Posterior cingulate gyrus (tissue), 11 donors: ENCODE measurements at regions of chr6 and their contacts with region 1.

Region 1: GRCh38 chr6:41920921-41921711 is at the starts of genes BYSL and MED20:
- DNase-seq: peak; percentile 91 to 99 (median 96)

Region 2: DNA sequence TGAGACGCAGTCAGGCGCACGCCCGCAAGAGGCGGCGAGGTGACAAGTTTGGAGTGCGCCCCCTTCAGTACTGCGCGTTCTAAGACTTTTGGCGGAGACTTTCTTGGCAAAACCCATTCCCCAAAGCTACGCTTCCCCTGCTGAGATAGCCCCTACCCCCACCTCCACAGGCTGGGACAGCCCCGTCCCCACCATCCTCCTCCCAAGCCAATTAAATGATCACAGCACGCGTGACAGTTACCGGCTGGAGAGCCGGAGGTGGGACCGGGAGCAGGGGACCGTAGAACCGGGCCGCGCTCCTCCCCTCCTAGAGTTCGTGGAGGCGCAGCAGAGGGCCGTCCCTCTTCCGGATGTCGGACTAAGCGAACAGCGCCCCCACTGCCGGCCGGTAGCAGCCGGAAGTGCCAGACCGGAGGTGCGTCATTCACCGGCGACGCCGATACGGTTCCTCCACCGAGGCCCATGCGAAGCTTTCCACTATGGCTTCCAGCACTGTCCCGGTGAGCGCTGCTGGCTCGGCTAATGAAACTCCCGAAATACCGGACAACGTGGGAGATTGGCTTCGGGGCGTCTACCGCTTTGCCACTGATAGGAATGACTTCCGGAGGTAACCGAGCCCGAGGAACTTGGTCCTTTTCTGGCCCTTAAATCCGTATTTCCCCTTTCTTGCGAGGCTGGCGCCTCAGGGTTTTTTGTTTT is 133.7 kb before region 1 on chr6 and contains the start of gene TOMM6:
- intact Hi-C with region 1: loop called (anchors 1 kb)
- DNase-seq: peak; percentile 90 to 99 (median 94)